ENCODE measurements at regions of chr4 and their contacts with region 1.

Region 1: DNA sequence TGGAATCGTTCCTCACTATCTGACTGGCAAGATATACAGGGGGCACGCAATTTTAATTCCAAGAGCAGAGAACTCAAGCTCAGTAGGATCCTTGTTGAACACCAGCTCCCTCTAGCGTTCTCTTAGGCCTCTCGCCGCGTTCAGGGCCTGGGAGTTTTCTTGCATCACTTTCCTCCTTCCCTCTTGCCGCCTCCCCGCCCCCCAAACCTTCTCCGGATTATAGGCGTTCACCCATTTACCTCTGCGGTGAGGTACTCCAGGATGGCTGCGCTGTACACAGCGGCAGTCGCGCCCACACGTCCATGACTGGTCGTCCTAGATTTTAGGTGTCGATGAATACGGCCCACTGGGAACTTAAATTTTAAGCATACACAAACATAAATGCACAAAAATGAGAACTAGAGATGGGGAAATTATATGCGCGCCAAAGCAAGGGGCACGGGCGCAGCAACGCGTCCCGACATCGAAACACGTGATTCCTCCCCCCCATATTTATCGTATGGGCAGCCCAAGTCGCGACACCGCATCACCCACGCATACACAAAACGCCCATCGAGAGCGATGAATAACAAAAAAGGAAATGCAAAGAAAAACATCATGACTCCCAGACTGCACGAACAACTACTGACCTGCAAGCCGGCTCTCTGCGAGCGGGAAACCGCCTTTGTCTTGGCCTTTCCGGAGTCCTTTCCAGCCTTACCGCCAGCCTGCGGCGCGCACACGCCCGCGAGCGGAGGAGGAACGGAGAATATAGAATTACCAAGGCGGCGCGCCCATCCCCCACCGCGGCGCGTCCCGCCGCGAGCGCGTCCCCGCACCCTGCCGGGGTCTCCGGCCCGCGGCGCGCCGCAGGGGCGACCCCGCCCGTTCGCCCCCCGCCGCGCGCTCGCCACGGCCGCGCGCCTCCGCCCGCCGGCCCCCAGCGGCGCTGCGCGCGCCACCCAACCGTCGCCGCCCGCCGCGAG is 759 bp downstream of the H2AZ1 start:
- DNase-seq: peak; percentile 96
- H3K4me3 Mint-ChIP-seq: no peak overlapping the region
- H3K27ac Mint-ChIP-seq: no peak overlapping the region
- H3K4me1 Mint-ChIP-seq: peaks cover 31% of the 10 kb centered on the region
- H3K27me3 Mint-ChIP-seq: no peaks in the 10 kb centered on the region

Region 2: DNA sequence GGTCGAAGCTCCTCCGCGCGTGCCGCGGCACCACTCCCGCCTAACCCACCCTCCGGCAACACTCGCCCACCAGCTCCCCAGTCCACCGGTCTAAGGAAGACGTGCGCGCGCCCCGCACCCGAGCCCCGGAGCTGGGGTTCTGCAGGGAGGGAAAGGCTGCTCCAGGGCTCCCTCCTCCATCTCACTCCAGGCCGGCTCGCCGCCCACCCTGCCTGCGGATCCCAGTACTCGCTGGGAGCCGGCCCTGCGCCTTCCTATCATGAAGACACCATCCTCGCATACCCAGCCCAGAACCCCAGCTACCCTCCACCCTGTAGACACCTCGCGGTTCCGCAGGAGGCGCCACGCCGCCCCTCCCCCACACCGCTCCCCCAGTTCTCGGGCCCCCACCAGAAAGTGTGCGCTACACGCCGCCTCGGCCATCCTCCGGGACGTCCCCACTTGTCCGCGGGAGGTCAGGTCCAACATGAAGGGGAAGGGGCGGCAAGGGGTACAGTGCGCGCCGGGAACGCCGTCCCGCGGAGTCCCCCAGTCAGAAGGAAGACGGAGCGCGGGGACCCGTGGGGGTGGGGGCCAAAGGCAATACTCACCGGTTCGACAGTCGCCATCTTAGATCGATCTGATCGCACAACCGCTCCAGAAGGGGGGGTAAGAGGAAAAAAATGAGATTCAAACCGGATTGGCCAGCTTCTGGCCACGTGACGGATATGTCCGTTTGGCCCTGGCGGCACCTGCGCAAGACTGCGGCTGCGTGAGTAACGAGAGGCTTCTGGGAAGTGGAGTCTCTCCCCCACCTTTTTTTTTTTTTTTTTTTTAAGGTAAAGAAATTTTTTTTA is 1020.6 kb before region 1 on chr4 and contains the start of gene EIF4E:
- CTCF ChIA-PET with region 1: no interaction called
- intact Hi-C with region 1: loop called (anchors 1 kb)
- DNase-seq: peak; percentile 98
- H3K4me3 Mint-ChIP-seq: peak within 1 kb of the TSS; percentile 87
- H3K27ac Mint-ChIP-seq: peak within 1 kb of the TSS; percentile 99
- H3K4me1 Mint-ChIP-seq: peaks cover 39% of the 10 kb centered on the region
- H3K27me3 Mint-ChIP-seq: no peaks in the 10 kb centered on the region
- total RNA-seq, gene EIF4E: 104 to 116 TPM

Region 3: GRCh38 chr4:99205153-99205979 is 744.0 kb before region 1 on chr4:
- CTCF ChIA-PET with region 1: no interaction called
- intact Hi-C with region 1: no loop called
- DNase-seq: no peak
- H3K4me3 Mint-ChIP-seq: no peak overlapping the region
- H3K27ac Mint-ChIP-seq: no peak overlapping the region
- H3K4me1 Mint-ChIP-seq: no peaks in the 10 kb centered on the region
- H3K27me3 Mint-ChIP-seq: peaks cover 2% of the 10 kb centered on the region

Region 4: GRCh38 chr4:99563310-99564186 is 385.8 kb before region 1 on chr4 and contains the start of gene TRMT10A:
- CTCF ChIA-PET with region 1: no interaction called
- intact Hi-C with region 1: loop called (anchors 1 kb)
- DNase-seq: peak; percentile 97
- H3K4me3 Mint-ChIP-seq: peak within 1 kb of the TSS; percentile 93
- H3K27ac Mint-ChIP-seq: peak within 1 kb of the TSS; percentile 96
- H3K4me1 Mint-ChIP-seq: peaks cover 14% of the 10 kb centered on the region
- H3K27me3 Mint-ChIP-seq: peaks cover 6% of the 10 kb centered on the region
- total RNA-seq, gene TRMT10A: 8.8 to 9.2 TPM

Region 5: DNA sequence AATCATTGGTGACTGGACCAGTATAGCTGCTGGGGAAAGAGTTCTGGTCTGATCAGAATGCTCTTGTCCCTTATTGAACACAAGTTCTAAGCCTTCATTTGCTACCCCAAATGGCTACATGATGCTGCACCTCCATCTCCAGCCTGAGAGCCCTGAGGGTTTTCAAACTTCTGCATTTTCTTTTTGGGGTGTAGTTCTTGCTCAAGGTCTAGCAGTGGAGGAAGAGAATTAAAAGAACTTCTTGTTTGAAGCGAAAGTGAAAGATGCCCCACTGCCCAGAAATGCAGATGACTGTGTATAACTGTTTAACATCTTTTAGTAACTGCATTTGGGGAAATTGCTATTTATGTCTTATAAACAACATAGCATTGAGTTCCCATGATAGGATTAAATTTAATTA is 93.6 kb before region 1 on chr4:
- CTCF ChIA-PET with region 1: interaction called, 3 read pairs
- intact Hi-C with region 1: loop called (anchors 1 kb)
- DNase-seq: peak; percentile 43
- H3K4me3 Mint-ChIP-seq: no peak overlapping the region
- H3K27ac Mint-ChIP-seq: peak overlapping the region; percentile 74
- H3K4me1 Mint-ChIP-seq: peaks cover 66% of the 10 kb centered on the region
- H3K27me3 Mint-ChIP-seq: no peaks in the 10 kb centered on the region

Region 6: GRCh38 chr4:99915449-99915848 is 33.9 kb before region 1 on chr4:
- CTCF ChIA-PET with region 1: no interaction called
- intact Hi-C with region 1: no loop called
- DNase-seq: no peak
- H3K4me3 Mint-ChIP-seq: no peak overlapping the region
- H3K27ac Mint-ChIP-seq: no peak overlapping the region
- H3K4me1 Mint-ChIP-seq: peaks cover 8% of the 10 kb centered on the region
- H3K27me3 Mint-ChIP-seq: no peaks in the 10 kb centered on the region

Region 7: DNA sequence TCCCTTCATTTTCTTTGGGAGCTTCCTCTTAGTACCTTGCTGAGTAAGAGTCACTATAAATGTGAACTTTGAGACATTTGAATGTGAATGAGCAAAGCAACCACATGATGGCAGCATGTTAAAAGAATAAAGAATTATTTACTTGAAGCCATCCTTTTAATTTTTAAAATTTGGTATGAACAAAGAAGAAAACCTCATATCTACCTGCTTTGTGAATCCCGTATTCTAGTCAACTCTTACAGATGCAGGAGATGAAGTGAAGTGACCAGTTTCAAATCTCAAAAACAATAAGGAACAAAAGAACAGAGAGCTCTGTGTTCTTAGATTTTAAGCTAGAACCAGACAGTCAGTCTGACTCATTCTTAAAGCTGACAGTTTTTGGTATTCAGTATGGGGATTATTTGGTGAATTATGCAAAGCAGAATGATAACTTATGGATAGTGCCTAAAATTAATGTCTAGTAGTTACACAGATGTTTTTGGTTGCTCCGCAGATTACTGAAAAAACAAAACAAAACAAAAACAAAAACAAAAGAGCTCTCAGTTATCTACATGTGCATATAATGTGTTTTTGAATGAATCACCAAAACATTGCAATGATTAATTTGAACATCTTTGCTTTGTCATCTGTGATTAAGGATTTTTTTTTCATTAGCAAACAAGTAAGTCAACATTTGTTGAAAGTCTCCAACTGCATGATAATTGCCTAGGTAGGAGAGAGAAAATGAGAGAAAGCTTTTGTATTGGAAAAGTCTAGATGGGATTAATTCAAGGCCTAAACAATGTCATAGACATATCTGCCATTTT is 48.9 kb after region 1 on chr4:
- CTCF ChIA-PET with region 1: interaction called, 7 read pairs
- intact Hi-C with region 1: loop called (anchors 1 kb)
- DNase-seq: peak; percentile 10
- H3K4me3 Mint-ChIP-seq: no peak overlapping the region
- H3K27ac Mint-ChIP-seq: peak overlapping the region; percentile 59
- H3K4me1 Mint-ChIP-seq: peaks cover 11% of the 10 kb centered on the region
- H3K27me3 Mint-ChIP-seq: peaks cover 5% of the 10 kb centered on the region

Region 8: DNA sequence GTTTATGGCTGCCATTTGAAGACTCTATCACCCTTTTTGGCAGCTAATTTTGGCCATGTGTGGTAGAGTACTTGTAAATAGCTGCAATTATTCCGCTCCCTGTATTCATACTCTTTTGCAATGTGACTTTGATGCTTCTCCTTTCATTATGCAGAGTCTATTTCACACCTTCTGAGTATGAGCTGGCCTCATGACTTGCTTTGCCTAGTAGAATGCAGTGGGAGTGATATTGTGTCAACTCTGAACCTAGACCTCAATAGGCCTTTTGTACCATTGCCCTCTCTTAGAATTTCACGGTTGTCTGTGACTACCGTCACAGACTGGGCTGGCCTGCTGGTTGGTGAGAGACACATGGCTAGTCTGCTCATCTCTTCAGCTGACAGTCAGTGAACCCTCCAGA is 122.2 kb after region 1 on chr4:
- CTCF ChIA-PET with region 1: no interaction called
- intact Hi-C with region 1: no loop called
- DNase-seq: no peak
- H3K4me3 Mint-ChIP-seq: no peak overlapping the region
- H3K27ac Mint-ChIP-seq: no peak overlapping the region
- H3K4me1 Mint-ChIP-seq: no peaks in the 10 kb centered on the region
- H3K27me3 Mint-ChIP-seq: peaks cover 29% of the 10 kb centered on the region

Region 9: GRCh38 chr4:100093091-100093866 is 144.0 kb after region 1 on chr4:
- CTCF ChIA-PET with region 1: interaction called, 3 read pairs
- intact Hi-C with region 1: loop called (anchors 1 kb)
- DNase-seq: peak; percentile 97
- H3K4me3 Mint-ChIP-seq: no peak overlapping the region
- H3K27ac Mint-ChIP-seq: peak overlapping the region; percentile 73
- H3K4me1 Mint-ChIP-seq: peaks cover 62% of the 10 kb centered on the region
- H3K27me3 Mint-ChIP-seq: peaks cover 2% of the 10 kb centered on the region

Region 10: DNA sequence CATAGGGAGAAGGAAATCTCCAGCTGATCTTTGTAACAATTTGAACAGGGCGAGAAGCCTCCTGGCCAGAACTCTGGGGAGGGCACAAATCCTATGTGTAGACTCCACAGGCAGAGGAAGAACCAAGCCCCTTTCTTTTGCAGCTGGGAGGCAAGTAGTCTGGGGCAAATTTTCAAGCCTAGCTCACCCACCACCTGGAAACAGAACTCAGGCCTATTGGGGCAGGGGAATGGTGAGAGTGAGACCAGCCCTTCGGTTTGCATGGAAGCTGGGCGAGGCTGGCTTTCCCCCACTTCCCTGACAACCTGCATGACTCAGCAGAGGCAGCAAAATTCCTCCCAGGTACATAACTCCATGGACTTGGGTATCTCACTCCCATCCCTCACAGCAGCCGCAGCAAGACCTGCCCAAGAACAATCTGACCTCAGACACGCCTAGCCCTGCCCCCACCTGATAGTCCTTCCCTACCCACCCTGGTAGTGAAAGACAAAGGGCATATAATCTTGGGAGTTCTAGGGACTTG is 430.3 kb after region 1 on chr4:
- CTCF ChIA-PET with region 1: no interaction called
- intact Hi-C with region 1: no loop called
- DNase-seq: no peak
- H3K4me3 Mint-ChIP-seq: no peak overlapping the region
- H3K27ac Mint-ChIP-seq: no peak overlapping the region
- H3K4me1 Mint-ChIP-seq: no peaks in the 10 kb centered on the region
- H3K27me3 Mint-ChIP-seq: peaks cover 5% of the 10 kb centered on the region